CD4-positive, alpha-beta T cell (primary cell): ENCODE measurements at regions of chr16 and their contacts with region 1.

Region 1: DNA sequence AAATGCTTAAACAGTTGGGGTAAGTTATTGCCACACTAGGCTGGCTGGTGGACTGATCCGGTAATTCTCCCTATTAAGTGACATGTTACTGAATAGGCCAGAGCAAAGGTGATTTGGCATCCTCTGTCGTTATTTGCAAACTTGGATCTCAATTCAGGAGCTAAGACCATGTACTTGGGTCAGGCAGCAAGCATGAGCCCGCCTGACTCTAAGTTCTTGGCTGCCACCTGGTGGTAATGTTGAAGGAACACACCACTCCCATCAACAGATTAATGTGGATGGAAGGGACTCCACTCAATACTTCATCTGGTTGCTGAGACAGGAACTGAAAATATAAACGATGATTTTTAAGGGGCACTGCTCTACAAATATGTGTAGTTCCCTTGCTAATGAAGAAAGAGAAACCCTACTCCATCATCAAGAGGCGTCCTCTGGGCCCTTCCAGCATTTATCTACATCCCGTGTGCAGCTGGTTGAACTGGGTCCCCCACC is 70.8 kb downstream of the EMP2 start:
- DNase-seq: peak; percentile 29 to 86 (median 50)
- ATAC-seq: peak; percentile 88
- H3K4me3 ChIP-seq: no peak overlapping the region
- H3K4me3 Mint-ChIP-seq: no peak overlapping the region
- H3K27ac ChIP-seq: no peak overlapping the region
- H3K27ac Mint-ChIP-seq: no peak overlapping the region
- H3K4me1 ChIP-seq: peaks cover 4% of the 10 kb centered on the region
- H3K4me1 Mint-ChIP-seq: peaks cover 8% of the 10 kb centered on the region
- H3K27me3 ChIP-seq: peaks cover 0 to 5% of the 10 kb centered on the region in 2 experiments
- H3K27me3 Mint-ChIP-seq: no peaks in the 10 kb centered on the region
- CTCF ChIP-seq: peak; percentile 86

Region 2: DNA sequence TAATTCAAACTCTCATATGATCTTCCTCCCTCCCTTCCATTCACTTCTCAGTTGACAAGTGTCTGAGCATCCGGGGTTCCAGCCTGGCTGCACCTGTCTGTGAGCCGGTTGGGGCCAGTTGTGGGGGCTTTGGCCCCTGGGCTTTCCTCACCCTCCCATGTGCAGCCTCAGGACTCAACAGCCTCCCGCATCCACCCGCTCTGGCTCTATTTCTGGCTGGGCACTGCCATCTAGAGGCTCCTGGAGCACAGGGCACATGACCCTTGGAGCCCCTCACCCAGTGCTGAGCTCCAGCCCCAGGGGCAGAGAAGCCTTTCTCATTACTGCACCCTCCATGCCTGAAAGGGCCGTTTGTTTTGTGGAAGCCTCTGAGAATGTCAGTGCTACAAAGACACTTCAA is 1374.8 kb before region 1 on chr16:
- CTCF ChIA-PET with region 1: no interaction called
- POLR2A ChIA-PET with region 1: no interaction called
- intact Hi-C with region 1: loop called in 1 of 2 experiments (anchors 10 kb)
- DNase-seq: peak; percentile 35 to 77 (median 52)
- ATAC-seq: peak; percentile 80
- H3K4me3 ChIP-seq: no peak overlapping the region
- H3K4me3 Mint-ChIP-seq: no peak overlapping the region
- H3K27ac ChIP-seq: no peak overlapping the region
- H3K27ac Mint-ChIP-seq: peak overlapping the region; percentile 47
- H3K4me1 ChIP-seq: peaks cover 22% of the 10 kb centered on the region
- H3K4me1 Mint-ChIP-seq: peaks cover 30% of the 10 kb centered on the region
- H3K27me3 ChIP-seq: peaks cover 3 to 4% of the 10 kb centered on the region in 2 experiments
- H3K27me3 Mint-ChIP-seq: no peaks in the 10 kb centered on the region
- CTCF ChIP-seq: peak; percentile 72

Region 3: DNA sequence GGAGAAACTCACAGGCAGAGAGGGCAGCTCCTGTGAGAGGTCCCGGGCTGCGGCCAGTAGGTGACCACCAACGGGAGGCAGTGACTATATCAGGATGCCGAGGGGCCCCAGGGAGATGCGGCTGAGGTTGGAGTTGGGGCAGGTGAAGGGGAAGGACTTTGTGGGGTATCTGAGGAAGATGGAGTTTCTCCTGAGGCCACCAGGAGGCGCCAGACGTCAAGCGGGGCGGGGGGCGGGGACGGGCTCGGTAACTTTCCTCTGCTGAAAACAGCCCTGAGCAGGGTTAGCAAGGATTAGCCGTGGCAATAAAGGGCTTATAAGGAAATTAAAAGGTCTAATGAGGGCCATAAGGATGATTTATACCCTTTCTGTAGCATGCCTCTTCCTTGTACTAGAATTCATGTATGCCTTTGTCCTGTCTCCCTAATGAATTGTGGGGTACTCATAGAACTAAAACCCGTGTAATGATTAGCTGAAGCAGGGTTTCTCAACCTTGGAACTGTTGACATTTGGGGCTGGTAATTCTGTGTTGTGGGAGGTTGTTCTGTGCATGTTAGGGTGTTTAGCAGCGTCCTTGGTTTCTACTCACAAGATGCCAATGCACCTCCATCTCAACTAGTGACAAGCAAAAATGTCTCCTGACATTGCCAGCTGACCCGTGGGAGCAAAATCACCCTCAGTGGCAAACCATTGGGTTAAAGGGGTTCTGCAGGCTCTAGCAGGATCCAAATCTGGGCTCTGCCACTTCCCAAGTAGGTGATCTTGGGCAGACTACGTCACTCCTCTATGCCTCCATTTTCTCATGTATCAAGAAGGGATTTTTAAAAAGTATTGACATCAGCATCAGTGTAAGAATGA is 252.6 kb before region 1 on chr16:
- CTCF ChIA-PET with region 1: interaction called, 7 read pairs
- POLR2A ChIA-PET with region 1: no interaction called
- intact Hi-C with region 1: loop called (anchors 1 kb)
- DNase-seq: peak; percentile 11 to 77 (median 31)
- ATAC-seq: no peak
- H3K4me3 ChIP-seq: no peak overlapping the region
- H3K4me3 Mint-ChIP-seq: no peak overlapping the region
- H3K27ac ChIP-seq: no peak overlapping the region
- H3K27ac Mint-ChIP-seq: no peak overlapping the region
- H3K4me1 ChIP-seq: peaks cover 6% of the 10 kb centered on the region
- H3K4me1 Mint-ChIP-seq: peaks cover 11% of the 10 kb centered on the region
- H3K27me3 ChIP-seq: peaks cover 0 to 3% of the 10 kb centered on the region in 2 experiments
- H3K27me3 Mint-ChIP-seq: peaks cover 11% of the 10 kb centered on the region
- CTCF ChIP-seq: peak; percentile 68

Region 4: DNA sequence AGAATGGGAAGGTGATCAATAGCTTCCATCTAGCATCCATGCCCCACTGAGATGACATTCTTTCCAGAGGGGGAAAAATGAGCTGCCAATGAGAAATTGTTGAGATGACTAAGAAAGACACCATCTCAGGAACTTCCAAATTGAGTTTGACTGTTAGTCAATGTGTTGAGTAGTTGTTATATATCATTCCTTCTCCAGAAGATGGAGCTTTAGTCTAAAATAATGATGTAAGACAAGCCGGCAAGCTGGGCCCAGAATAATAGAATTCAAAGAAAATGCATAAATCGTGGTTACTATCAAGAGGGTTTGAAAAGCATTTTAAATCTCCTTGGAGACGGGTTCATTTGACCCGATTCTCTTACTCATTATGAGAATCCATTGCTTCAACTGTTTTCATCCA is 194.8 kb before region 1 on chr16:
- CTCF ChIA-PET with region 1: interaction called, 30 read pairs
- POLR2A ChIA-PET with region 1: interaction called, 8 read pairs
- intact Hi-C with region 1: loop called (anchors 1 kb)
- DNase-seq: peak in 4 of 14 experiments; percentile 23 to 60 (median 55)
- ATAC-seq: peak; percentile 77
- H3K4me3 ChIP-seq: no peak overlapping the region
- H3K4me3 Mint-ChIP-seq: no peak overlapping the region
- H3K27ac ChIP-seq: no peak overlapping the region
- H3K27ac Mint-ChIP-seq: no peak overlapping the region
- H3K4me1 ChIP-seq: peaks cover 3% of the 10 kb centered on the region
- H3K4me1 Mint-ChIP-seq: peaks cover 26% of the 10 kb centered on the region
- H3K27me3 ChIP-seq: no peaks in the 10 kb centered on the region
- H3K27me3 Mint-ChIP-seq: no peaks in the 10 kb centered on the region
- CTCF ChIP-seq: peak; percentile 61

Region 5: GRCh38 chr16:10368969-10369551 is 140.5 kb before region 1 on chr16:
- CTCF ChIA-PET with region 1: no interaction called
- POLR2A ChIA-PET with region 1: no interaction called
- intact Hi-C with region 1: no loop called
- DNase-seq: no peak
- ATAC-seq: no peak
- H3K4me3 ChIP-seq: no peak overlapping the region
- H3K4me3 Mint-ChIP-seq: no peak overlapping the region
- H3K27ac ChIP-seq: no peak overlapping the region
- H3K27ac Mint-ChIP-seq: no peak overlapping the region
- H3K4me1 ChIP-seq: no peaks in the 10 kb centered on the region
- H3K4me1 Mint-ChIP-seq: no peaks in the 10 kb centered on the region
- H3K27me3 ChIP-seq: no peaks in the 10 kb centered on the region
- H3K27me3 Mint-ChIP-seq: no peaks in the 10 kb centered on the region
- CTCF ChIP-seq: no peak

Region 6: GRCh38 chr16:10616730-10617555 is 107.4 kb after region 1 on chr16:
- CTCF ChIA-PET with region 1: no interaction called
- POLR2A ChIA-PET with region 1: no interaction called
- intact Hi-C with region 1: no loop called
- DNase-seq: no peak
- ATAC-seq: no peak
- H3K4me3 ChIP-seq: no peak overlapping the region
- H3K4me3 Mint-ChIP-seq: no peak overlapping the region
- H3K27ac ChIP-seq: no peak overlapping the region
- H3K27ac Mint-ChIP-seq: no peak overlapping the region
- H3K4me1 ChIP-seq: no peaks in the 10 kb centered on the region
- H3K4me1 Mint-ChIP-seq: no peaks in the 10 kb centered on the region
- H3K27me3 ChIP-seq: peaks cover 5 to 18% of the 10 kb centered on the region in 2 experiments
- H3K27me3 Mint-ChIP-seq: peaks cover 37% of the 10 kb centered on the region
- CTCF ChIP-seq: no peak

Region 7: DNA sequence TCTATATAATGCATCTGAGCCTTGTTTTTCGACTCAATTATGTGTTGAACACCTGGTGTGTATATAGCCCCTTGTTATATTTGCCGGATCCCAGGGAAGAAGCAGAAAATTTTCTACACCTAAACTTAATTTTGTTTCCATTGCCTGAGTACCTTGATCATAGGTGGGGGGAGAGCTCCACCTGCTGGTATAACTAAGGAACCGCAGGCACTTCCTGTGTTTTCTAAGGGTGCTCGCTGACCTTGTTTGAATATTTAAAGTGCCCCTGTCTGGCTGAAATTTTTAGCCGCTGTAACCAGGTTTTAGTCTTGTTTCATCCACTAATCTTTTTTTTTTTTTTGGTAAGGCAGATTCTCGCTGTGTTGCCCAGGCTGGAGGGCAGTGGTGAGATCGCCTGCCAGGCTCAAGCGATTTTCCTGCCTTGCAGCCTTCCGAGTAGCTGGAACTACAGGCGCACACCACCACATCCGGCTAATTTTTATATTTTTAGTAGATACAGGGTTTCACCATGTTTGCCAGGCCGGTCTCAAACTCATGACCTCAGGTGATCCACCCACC is 227.6 kb after region 1 on chr16:
- CTCF ChIA-PET with region 1: interaction called, 24 read pairs
- POLR2A ChIA-PET with region 1: interaction called, 4 read pairs
- intact Hi-C with region 1: loop called (anchors 1 kb)
- DNase-seq: peak; percentile 51 to 88 (median 64)
- ATAC-seq: peak; percentile 92
- H3K4me3 ChIP-seq: peak overlapping the region; percentile 24
- H3K4me3 Mint-ChIP-seq: peak overlapping the region; percentile 67
- H3K27ac ChIP-seq: no peak overlapping the region
- H3K27ac Mint-ChIP-seq: peak overlapping the region; percentile 66
- H3K4me1 ChIP-seq: peaks cover 14% of the 10 kb centered on the region
- H3K4me1 Mint-ChIP-seq: peaks cover 6% of the 10 kb centered on the region
- H3K27me3 ChIP-seq: no peaks in the 10 kb centered on the region
- H3K27me3 Mint-ChIP-seq: no peaks in the 10 kb centered on the region
- CTCF ChIP-seq: peak; percentile 89